ENCODE measurements at regions of chr7 and their contacts with region 1.

Region 1: DNA sequence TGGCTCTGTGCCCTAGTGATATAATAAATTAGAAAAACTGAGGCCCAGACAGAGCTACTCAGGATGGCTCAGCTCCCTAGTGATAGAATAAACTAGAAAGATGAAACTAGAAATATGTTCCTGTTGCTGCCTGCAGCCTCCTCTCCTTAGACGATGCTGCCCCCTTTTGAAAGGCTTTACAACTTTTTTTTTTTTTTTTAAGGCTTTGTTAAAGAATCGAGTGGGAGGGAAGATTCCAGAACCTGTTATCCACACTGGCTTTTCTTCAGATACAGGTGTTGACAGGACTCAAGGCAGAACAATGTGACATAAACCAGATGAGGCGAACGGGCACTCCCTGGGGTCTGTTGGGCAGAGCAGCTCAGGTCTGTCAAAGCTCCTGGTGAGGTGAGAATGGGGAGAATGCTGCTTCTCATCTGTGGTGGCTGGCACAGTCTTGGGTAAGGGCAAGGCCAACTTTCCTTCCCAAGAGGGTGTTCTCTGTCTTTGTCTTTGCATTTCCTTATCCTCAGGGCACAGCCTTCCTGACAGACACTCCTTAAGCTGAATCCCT is 175.1 kb downstream of the COBL start:
- DNase-seq: no peak
- ATAC-seq: peak; percentile 77 to 78
- H3K4me3 ChIP-seq: no peak overlapping the region
- H3K27ac ChIP-seq: peak overlapping the region; percentile 60
- H3K4me1 ChIP-seq: peaks cover 2% of the 10 kb centered on the region
- H3K27me3 ChIP-seq: no peaks in the 10 kb centered on the region

Region 2: DNA sequence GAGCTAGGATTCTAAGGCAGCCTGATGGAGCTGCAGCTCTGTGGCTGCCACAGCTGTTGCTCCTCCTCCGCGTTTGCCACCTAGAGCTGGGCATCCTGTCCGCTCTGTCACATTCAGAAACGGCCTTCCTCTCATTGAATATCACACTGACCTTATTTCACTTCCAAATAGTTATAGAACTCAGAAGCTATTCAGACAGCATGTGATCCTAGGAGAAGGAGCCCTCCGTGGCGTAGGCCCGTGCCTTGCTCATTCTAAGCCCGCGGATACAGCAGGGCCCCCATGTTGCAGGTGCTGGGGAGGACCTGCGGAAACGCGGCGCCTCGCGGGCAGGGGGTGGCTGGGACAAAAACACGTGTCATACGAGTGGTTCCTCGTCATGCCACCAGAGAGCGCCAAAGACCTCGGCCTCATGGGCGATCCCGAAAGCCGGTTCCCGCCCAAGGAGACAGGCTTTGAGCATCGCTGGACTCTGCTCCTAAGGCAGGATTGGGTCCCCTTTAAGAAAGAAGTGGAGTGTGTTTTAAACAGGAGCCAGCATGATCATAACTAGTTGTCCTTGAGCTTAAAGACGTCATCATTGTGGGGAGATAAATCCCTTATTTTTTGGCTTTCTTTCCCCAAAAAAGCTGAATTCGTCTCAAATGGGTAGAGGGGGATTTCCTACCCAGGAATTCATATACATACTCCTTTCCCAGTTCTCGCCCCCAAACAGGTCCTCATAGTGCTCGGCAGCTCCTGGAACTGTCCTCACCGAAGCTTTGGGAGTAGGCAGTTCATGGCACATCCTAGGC is 673.5 kb before region 1 on chr7:
- intact Hi-C with region 1: loop called in 2 of 4 experiments (anchors 5 to 10 kb)
- DNase-seq: peak; percentile 82 to 94 (median 91)
- ATAC-seq: peak; percentile 89 to 91
- H3K4me3 ChIP-seq: no peak overlapping the region
- H3K27ac ChIP-seq: no peak overlapping the region
- H3K4me1 ChIP-seq: no peaks in the 10 kb centered on the region
- H3K27me3 ChIP-seq: no peaks in the 10 kb centered on the region

Region 3: DNA sequence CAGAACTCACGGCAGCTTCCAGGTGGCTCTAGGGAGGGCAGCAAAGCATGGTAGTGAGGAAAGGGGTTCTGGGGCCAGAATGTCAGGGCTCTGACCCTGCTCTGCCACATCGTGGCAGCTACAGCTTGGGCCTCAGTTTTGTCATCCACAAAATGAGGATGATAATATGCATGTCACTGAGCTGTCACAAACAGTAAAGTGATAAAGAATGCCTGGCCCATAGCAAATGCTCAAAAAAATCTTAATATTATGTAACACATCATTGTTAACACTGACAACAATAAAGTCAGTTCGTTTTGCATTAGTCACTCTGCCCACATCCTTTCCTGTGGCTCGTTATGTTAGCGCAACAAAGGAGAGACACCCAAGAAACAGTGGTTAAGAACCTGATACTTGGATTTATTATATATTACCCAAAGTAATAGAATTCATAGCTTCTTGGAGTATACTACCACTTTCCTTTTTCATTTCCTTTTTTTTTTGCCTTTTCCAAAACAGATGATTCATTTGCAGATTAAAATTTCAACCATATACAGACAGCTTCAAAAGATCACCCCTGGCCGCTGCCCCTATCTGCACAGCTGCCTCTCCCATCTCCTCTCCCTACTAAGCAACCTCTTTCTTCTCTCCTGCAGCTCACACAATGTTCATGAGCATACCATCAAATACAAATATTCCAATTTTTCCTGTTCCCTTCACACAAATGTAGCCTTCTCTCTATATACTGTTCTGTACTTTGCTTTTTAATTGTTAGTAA is 530.8 kb before region 1 on chr7:
- intact Hi-C with region 1: loop called in 1 of 4 experiments (anchors 10 kb)
- DNase-seq: no peak
- ATAC-seq: no peak
- H3K4me3 ChIP-seq: no peak overlapping the region
- H3K27ac ChIP-seq: no peak overlapping the region
- H3K4me1 ChIP-seq: no peaks in the 10 kb centered on the region
- H3K27me3 ChIP-seq: no peaks in the 10 kb centered on the region

Region 4: DNA sequence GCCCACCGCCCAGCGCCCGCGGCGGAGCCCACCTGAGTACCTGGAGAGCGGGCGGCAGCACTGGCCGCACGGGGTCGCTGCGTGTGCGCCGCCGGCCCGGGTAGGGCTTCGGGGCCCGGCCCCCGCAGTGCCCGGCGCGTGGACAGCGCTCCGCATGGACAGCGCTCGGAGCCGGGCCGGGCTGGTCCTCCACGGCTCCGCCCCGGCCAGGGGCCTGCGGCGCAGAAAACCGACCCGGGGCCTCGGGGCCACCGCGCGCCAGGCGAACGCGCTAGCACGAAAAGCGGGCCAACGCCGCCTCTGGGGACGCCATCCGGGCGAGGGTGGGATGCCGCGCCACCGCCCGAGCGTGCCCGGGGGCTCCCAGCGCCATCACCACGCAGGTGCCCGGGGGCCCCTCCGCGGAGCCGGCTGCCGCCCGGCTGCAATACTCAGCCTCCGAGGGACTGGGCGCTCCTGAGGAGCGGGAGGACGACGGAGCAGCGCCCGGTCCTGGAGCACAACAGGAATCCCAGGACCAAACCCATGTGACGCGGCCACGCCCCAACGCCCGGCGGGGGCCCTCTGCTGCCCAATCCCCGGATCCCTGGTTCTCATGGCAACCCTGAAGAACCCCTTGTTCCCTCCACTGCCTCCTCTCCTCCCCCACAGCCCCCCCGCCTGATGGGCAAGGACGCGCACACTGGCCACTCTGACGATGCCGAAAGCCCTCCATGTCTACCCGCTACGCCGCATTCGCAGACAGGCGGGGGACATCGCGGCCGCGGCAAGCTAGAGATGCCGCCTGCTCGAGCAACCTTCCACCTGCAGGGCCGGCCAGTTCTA is 358.9 kb before region 1 on chr7 and contains the start of gene GRB10:
- intact Hi-C with region 1: loop called in 2 of 4 experiments (anchors 10 kb)
- DNase-seq: peak; percentile 52 to 82 (median 80)
- ATAC-seq: peak; percentile 75 to 85
- H3K4me3 ChIP-seq: peak within 1 kb of the TSS; percentile 50
- H3K27ac ChIP-seq: no peak within 1 kb of the TSS
- H3K4me1 ChIP-seq: peaks cover 20% of the 10 kb centered on the region
- H3K27me3 ChIP-seq: no peaks in the 10 kb centered on the region
- total RNA-seq, gene GRB10: 52.0 to 86.0 (median 63.9) TPM